ENCODE measurements at regions of chr12 and their contacts with region 1.

Region 1: DNA sequence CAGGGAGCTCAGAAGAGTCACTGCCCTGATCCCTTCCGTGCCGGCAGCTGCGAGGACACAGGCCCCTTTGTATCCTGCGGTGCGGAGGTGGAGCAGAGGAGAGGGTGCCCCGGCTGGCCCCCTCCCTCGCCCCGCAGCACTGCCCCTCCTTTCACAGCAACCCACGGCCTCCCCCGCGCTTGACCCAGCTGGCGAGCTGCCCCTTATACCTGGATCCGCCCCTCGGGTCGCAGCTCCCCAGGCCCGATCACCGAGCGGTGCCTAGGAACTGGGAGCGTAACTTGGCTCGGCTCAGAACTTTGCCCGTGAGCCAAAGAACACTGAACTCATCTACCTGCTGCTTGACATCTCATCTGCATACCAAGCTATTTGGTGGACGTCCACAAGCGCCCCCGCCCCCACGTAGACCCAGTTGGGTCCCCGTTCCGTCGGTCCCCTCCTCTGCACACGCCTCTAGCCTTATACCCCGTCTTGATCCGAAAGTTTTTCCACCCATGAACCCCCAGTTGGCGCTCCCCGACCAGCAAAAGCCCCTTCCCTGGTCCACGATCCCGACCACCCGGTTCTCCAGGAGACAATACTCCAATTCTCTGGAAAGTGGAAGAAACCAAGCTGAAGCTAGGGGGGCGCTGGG is 697 bp upstream of the DNAJC14 start:
- DNase-seq: peak; percentile 45 to 70 (median 55)
- ATAC-seq: peak; percentile 19 to 47 (median 37)
- H3K4me3 ChIP-seq: peak overlapping the region; percentile 72 to 97 (median 88)
- H3K27ac ChIP-seq: peak overlapping the region; percentile 87 to 95 (median 92)
- H3K4me1 ChIP-seq: peaks cover 0 to 53% (median 34%) of the 10 kb centered on the region in 12 donors
- H3K27me3 ChIP-seq: no peaks in the 10 kb centered on the region
- CTCF ChIP-seq: no peak
- POLR2A ChIP-seq: no peak

Region 2: DNA sequence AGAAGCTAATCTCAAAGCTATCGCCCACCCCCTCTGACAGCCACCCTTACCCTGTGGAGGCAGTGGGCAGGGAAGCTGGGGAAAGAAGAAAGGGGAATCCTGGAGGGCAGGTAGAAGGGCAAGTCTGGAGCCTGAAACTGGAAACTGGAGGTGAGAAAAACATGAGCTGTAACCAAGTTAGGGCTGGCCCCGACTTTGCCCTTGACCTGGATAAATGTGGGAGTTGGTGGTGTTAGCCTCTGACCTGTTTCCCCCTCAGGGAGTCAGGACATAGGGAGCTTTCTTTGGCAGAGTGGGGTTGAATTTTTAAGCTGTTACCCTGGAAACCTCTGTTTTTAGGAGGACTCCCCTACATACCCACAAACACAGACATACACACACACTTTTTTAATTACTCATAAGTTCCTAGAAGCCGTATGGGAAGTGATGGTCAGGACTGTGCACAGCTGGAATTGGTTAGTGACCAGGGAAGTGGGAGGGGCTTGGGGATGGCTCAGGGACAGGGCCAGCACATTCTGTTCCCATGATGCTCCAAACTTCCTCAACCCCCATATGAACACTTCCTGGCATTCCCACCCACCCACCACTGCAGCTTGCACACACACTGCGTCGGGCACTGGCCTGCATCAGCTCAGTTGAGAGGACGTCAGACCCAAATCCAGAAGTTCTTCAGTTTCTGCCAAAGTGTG is 17.7 kb after region 1 on chr12:
- intact Hi-C with region 1: loop called in 1 of 10 experiments (anchors 2 kb)
- DNase-seq: peak; percentile 85 to 96 (median 89)
- ATAC-seq: peak; percentile 92 to 98 (median 96)
- H3K4me3 ChIP-seq: peak overlapping the region in 8 of 12 donors; percentile 23 to 45 (median 32)
- H3K27ac ChIP-seq: peak overlapping the region; percentile 81 to 96 (median 90)
- H3K4me1 ChIP-seq: peaks cover 0 to 65% (median 14%) of the 10 kb centered on the region in 12 donors
- H3K27me3 ChIP-seq: peaks cover 0 to 4% (median 0%) of the 10 kb centered on the region in 9 donors
- CTCF ChIP-seq: no peak
- POLR2A ChIP-seq: peak in 1 of 2 donors; percentile 65

Region 3: GRCh38 chr12:55874443-55874842 is 44.4 kb after region 1 on chr12:
- intact Hi-C with region 1: no loop called
- DNase-seq: no peak
- ATAC-seq: no peak
- H3K4me3 ChIP-seq: no peak overlapping the region
- H3K27ac ChIP-seq: no peak overlapping the region
- H3K4me1 ChIP-seq: no peaks in the 10 kb centered on the region
- H3K27me3 ChIP-seq: no peaks in the 10 kb centered on the region
- CTCF ChIP-seq: no peak
- POLR2A ChIP-seq: no peak

Region 4: DNA sequence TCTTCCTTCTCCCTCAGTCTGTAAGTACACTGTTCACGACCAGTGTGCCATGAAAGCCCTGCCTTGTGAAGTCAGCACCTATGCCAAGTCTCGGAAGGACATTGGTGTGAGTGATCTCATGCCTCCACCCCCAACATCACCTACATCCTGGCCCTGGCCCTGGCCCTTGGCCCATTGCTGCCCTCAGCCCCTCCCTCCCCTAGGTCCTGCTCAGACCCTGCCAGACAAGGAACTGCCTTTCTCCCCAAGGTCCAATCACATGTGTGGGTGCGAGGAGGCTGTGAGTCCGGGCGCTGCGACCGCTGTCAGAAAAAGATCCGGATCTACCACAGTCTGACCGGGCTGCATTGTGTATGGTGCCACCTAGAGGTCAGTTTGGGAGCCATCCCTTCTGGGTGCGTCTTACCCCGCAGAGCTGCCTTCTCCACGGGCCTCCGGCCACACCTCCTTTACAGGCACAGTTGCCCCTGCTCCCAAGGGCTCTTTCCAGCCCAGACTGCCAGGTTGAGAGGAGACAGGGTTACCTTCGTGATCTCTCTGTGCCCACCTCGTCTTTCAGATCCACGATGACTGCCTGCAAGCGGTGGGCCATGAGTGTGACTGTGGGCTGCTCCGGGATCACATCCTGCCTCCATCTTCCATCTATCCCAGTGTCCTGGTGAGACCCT is 110.1 kb after region 1 on chr12:
- intact Hi-C with region 1: loop called in 1 of 10 experiments (anchors 5 kb)
- DNase-seq: peak; percentile 83 to 87 (median 87)
- ATAC-seq: peak; percentile 85 to 96 (median 95)
- H3K4me3 ChIP-seq: peak overlapping the region in 8 of 12 donors; percentile 15 to 42 (median 24)
- H3K27ac ChIP-seq: peak overlapping the region in 2 of 12 donors; percentile 7 to 58
- H3K4me1 ChIP-seq: peaks cover 0 to 13% (median 7%) of the 10 kb centered on the region in 12 donors
- H3K27me3 ChIP-seq: no peaks in the 10 kb centered on the region
- CTCF ChIP-seq: peak; percentile 87 to 94 (median 91)
- POLR2A ChIP-seq: no peak

Region 5: DNA sequence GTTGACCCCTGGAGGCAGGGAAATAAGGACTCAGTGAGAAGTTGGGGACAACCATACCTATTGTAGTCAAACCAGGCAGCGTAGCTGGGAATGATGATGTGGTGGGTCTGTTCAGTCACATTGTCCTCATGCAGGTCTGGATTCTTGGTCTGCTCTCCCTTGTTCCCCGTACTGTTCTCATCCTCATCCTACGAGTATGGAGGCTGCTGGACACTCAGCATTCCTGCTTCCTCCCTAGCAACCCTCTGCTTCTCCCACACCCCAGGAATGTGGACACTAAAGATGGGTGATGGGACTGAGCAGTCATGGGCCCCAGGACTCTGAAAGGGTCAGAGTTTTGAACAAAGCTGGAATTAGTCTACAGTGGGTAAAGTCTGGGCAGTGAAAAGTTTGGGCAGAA is 348.3 kb after region 1 on chr12:
- intact Hi-C with region 1: no loop called
- DNase-seq: no peak
- ATAC-seq: no peak
- H3K4me3 ChIP-seq: no peak overlapping the region
- H3K27ac ChIP-seq: no peak overlapping the region
- H3K4me1 ChIP-seq: no peaks in the 10 kb centered on the region
- H3K27me3 ChIP-seq: no peaks in the 10 kb centered on the region
- CTCF ChIP-seq: no peak
- POLR2A ChIP-seq: no peak